AG04450 (cell line): ENCODE measurements at regions of chr9 and their contacts with region 1.

Region 1: GRCh38 chr9:127943731-127944144 is 6.1 kb upstream of the DPM2 start:
- DNase-seq: no peak
- H3K4me3 ChIP-seq: no peak overlapping the region
- H3K27ac ChIP-seq: no peak overlapping the region
- H3K27me3 ChIP-seq: no peaks in the 10 kb centered on the region
- CTCF ChIP-seq: peak; percentile 96

Region 2: DNA sequence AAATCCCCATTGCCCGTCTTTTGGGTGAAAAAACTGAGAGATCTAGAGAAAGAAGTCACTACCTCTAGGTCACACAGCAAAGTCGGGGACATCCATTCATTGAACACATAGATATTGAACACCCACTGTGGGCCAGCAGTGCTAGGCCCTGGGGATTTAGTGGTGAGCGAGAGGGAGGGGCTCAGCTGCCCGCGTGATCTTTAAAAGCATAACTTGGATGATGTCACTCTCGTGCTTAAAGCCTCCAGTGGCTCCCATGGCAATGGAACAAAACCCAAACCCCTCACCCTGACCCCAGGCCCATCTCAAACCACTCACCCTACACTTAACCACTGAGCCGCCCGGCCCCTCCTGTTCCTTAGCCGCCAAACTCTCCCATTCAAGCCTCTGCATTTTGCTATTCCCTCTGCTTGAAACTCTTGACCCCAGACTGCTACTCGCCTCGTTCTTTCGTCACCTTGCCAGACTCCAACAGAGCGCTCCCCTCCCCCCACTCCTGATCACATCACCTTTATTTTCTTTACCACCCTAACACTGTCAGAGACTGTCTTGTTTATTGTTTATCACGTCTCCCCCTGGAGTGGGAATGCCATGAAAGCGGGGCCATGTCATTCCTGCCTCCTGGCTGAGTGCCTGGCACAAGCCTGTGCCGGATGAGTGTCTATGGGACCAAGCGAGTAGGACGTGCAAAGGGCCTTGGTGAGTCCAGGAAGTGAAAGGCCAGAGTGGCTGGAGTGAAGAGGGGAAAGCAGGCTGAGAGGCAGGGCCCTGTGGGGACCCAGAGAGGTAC is 12.5 kb before region 1 on chr9:
- CTCF ChIA-PET with region 1: interaction called, 19 read pairs
- POLR2A ChIA-PET with region 1: no interaction called
- DNase-seq: no peak
- H3K4me3 ChIP-seq: peak overlapping the region; percentile 65
- H3K27ac ChIP-seq: peak overlapping the region; percentile 90
- H3K27me3 ChIP-seq: no peaks in the 10 kb centered on the region
- CTCF ChIP-seq: no peak

Region 3: DNA sequence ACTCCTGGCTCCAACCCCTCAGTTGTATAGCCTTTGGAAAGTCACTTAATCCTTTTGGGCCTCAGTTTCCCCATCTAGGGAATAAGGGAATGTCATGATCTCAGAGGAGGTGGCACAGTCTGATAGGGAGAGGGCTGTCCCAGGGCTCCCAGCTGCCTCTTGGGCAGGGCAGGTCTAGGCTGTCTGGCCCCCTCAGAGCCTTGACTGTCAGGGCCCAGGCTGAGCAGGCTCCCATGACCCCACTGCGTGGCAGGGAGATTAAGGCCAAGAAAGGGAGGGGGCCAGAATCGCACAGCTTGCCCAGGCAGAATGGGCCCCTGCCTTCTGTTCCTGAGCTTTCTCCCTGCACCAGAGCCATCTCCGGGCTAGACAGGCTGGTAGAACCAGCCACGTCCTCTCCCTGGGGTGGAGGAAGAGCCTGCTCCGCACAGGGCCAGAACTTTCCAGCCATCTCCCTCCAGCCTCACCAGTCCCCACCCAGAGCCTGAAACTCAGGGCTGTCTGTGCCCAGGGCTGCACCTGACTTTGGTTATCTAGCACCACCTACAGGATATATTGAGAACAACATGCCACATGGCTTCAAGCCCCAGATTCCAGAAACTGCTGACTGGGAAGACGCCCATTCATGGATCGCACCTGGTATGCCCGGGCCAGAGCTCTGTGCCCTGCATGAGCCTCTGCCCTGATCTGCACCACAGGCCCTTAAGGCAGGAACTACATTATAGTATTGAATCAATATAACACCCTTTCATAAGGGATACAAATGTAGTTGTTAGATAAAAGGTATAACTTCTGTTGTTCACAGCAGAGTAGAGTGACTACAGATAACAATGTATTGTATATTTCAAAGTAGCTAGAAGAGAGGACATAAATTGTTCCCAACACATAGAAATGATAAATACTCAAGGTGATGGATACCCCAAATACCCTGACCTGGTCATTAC is 91.4 kb after region 1 on chr9:
- CTCF ChIA-PET with region 1: interaction called, 44 read pairs
- POLR2A ChIA-PET with region 1: no interaction called
- DNase-seq: peak; percentile 23
- H3K4me3 ChIP-seq: no peak overlapping the region
- H3K27ac ChIP-seq: no peak overlapping the region
- H3K27me3 ChIP-seq: peaks cover 2% of the 10 kb centered on the region
- CTCF ChIP-seq: peak; percentile 66

Region 4: GRCh38 chr9:128067876-128068613 is 124.3 kb after region 1 on chr9 and contains the start of gene SLC25A25:
- CTCF ChIA-PET with region 1: interaction called, 14 read pairs
- POLR2A ChIA-PET with region 1: no interaction called
- DNase-seq: peak; percentile 99
- H3K4me3 ChIP-seq: peak within 1 kb of the TSS; percentile 93
- H3K27ac ChIP-seq: peak within 1 kb of the TSS; percentile 100
- H3K27me3 ChIP-seq: no peaks in the 10 kb centered on the region
- CTCF ChIP-seq: no peak
- polyA plus RNA-seq, gene SLC25A25: 12.0 and 12.6 TPM in 2 replicates

Region 5: DNA sequence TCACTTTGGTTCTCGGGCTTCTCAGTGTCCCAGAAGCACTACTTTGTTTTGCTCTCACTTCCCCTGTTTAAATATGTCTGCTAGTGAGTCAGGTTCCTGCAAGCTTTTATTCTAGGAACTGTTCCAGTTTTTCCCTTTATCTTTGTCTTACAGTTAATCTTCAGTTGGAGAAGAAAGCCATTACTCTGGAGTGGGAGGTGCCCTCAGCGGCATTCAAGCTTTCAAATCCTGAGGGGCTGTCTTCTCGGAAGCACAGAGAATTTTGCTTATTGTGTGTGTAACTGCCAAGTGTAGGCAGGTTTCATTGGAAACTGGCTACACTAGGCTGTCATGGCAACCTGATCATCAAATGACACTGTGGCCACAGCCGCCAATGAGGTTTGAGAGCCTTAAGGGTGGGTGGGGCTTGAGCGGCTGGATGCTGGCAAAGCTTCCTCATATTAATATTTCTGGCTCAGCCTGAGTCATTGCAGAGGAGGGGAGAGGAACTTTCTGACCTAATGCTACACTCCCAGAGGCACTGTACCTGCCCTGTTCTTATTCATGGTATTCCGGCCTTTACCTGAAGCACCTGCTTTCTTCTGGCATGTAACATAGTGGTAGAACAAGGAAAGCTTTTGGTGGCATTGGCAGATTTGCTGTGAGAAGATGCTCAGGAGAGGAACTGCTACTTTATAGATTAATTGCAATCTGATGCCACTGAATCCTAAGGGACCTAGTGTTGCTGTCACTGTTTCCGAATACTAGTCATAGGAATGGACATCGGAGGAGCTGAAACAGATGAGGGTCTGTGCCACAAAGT is 150.6 kb after region 1 on chr9:
- CTCF ChIA-PET with region 1: interaction called, 29 read pairs
- POLR2A ChIA-PET with region 1: interaction called, 4 read pairs
- DNase-seq: peak; percentile 89
- H3K4me3 ChIP-seq: peak overlapping the region; percentile 42
- H3K27ac ChIP-seq: peak overlapping the region; percentile 84
- H3K27me3 ChIP-seq: no peaks in the 10 kb centered on the region
- CTCF ChIP-seq: no peak

Region 6: DNA sequence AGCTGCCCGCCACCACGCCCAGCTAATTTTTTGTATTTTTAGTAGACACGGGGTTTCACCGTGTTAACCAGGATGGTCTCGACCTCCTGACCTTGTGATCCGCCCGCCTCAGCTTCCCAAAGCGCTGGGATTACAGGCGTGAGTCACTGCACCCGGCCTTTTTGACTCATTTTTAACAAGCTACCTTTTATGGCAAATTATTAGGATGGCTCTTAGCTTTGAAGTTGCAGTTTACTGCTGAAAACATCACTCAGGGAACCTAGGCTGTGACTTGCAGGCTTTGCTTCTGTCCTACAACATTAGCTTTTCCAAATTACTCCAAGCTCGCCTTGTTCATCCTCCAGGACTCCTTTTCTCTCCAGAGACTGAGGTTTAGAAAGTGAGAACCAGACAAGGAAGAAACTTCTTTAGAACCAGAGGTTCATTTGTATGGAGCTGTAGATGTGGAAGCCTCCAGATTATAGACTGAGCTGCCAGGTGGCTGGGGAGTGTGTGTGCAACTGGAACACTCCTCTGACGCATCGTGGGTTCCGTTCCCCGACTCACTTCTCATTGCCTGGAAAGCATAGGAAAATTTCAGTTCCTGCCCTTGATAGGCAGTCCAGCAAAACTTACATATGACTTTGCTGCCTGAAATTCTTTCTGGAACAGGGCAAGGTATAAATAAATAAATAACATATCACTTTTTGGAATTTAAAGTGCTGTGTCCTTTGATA is 584.9 kb after region 1 on chr9:
- CTCF ChIA-PET with region 1: no interaction called
- POLR2A ChIA-PET with region 1: no interaction called
- DNase-seq: no peak
- H3K4me3 ChIP-seq: no peak overlapping the region
- H3K27ac ChIP-seq: no peak overlapping the region
- H3K27me3 ChIP-seq: no peaks in the 10 kb centered on the region
- CTCF ChIP-seq: no peak